CD4-positive, alpha-beta T cell (primary cell): ENCODE measurements at regions of chr9 and their contacts with region 1.

Region 1: DNA sequence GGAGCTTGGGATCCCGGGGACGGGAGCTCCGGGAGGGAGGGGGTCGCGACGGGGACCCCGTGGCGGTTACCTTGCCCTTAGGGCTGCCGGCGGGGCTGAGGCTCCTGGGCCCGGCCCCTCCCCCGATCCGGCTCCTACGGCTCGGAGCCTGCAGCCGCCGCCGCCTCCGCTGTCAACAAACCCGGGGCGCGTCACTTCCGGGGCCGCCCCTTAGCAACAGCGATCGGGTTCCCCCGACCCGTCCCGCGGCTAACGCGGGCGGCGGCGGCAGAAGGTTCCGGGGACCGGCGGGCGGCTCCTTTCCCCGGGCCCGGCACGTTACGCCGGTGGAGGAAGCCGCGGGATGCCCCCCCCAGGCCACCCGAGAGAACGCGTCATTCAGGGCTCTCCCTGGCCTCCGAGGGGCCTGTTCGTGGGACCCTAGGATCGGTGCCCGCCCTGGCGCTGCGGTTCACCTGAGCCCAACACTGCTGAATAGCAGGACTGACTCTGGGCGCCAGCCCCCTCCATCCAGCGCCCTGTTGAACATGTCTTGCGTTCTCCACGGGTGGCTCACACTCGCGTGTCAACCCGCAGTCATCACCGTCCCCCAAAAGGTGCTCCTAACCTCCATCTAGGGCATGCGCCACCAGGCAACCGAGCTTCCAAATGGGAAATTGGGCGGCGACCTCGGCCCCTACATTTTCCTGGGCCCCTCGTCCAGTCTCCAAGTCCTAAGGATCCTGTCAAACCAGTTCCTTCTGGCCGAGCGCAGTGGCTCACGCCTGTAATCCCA is at the start of gene ZER1:
- DNase-seq: peak; percentile 88 to 97 (median 94)
- ATAC-seq: peak; percentile 85
- H3K4me3 ChIP-seq: peak within 1 kb of the TSS; percentile 95
- H3K4me3 Mint-ChIP-seq: peak within 1 kb of the TSS; percentile 98
- H3K27ac ChIP-seq: peak within 1 kb of the TSS; percentile 82 to 83
- H3K27ac Mint-ChIP-seq: peak within 1 kb of the TSS; percentile 98
- H3K4me1 ChIP-seq: peaks cover 25% of the 10 kb centered on the region
- H3K4me1 Mint-ChIP-seq: peaks cover 39% of the 10 kb centered on the region
- H3K27me3 ChIP-seq: no peaks in the 10 kb centered on the region
- H3K27me3 Mint-ChIP-seq: no peaks in the 10 kb centered on the region
- CTCF ChIP-seq: no peak
- total RNA-seq, gene ZER1: 25.4 to 32.6 TPM

Region 2: DNA sequence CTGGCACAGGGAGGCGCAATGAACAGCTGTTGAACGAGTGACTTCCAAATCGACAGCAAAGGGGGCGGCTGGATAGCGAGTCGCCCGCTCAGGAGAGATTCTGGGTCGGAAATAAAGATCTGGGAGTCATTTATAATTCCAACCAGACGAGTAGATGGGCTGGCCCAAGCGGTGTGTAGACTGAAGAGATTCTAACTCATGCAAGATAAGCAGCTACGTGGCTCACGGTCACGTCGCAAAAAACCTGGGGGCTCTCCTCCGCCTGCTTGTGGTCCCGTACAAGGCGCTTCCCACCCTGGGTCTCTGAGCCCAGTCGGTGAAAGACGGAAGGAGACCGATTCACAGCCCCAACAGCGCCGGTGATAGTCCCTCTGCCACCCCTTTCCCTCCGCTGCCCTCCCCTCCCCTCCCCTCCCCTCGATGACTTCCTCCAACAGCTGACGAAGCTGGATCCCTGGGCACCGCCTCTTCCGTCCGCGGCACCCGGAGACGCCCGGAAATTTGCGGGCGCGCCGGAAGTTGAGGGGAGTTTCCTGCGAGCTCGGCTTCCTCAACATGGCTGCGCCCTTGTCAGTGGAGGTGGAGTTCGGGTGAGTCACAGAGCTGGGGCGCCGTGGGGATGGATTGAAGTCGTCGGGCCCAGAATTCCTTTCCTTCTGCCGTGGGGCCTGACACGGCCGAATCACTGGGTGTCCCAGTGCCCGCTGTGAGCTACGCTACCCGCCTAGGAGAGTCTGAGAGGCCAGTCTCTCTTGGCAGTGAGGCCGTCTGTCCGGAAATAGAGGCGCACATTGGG is 400.9 kb before region 1 on chr9 and contains the start of gene URM1:
- CTCF ChIA-PET with region 1: no interaction called
- POLR2A ChIA-PET with region 1: interaction called, 8 read pairs
- intact Hi-C with region 1: loop called in 1 of 2 experiments (anchors 5 kb)
- DNase-seq: peak; percentile 90 to 98 (median 94)
- ATAC-seq: peak; percentile 94
- H3K4me3 ChIP-seq: peak within 1 kb of the TSS; percentile 93
- H3K4me3 Mint-ChIP-seq: peak within 1 kb of the TSS; percentile 97
- H3K27ac ChIP-seq: peak within 1 kb of the TSS; percentile 68 to 92
- H3K27ac Mint-ChIP-seq: peak within 1 kb of the TSS; percentile 94
- H3K4me1 ChIP-seq: peaks cover 20% of the 10 kb centered on the region
- H3K4me1 Mint-ChIP-seq: peaks cover 34% of the 10 kb centered on the region
- H3K27me3 ChIP-seq: no peaks in the 10 kb centered on the region
- H3K27me3 Mint-ChIP-seq: no peaks in the 10 kb centered on the region
- CTCF ChIP-seq: no peak
- total RNA-seq, gene URM1: 28.4 to 28.8 TPM

Region 3: GRCh38 chr9:128688512-128689292 is 83.2 kb before region 1 on chr9 and contains the start of gene SET:
- CTCF ChIA-PET with region 1: no interaction called
- POLR2A ChIA-PET with region 1: interaction called, 19 read pairs
- intact Hi-C with region 1: loop called in 1 of 2 experiments (anchors 1 kb)
- DNase-seq: peak; percentile 82 to 97 (median 92)
- ATAC-seq: peak; percentile 78
- H3K4me3 ChIP-seq: peak within 1 kb of the TSS; percentile 89
- H3K4me3 Mint-ChIP-seq: peak within 1 kb of the TSS; percentile 95
- H3K27ac ChIP-seq: peak within 1 kb of the TSS; percentile 84
- H3K27ac Mint-ChIP-seq: peak within 1 kb of the TSS; percentile 94
- H3K4me1 ChIP-seq: peaks cover 58% of the 10 kb centered on the region
- H3K4me1 Mint-ChIP-seq: peaks cover 59% of the 10 kb centered on the region
- H3K27me3 ChIP-seq: no peaks in the 10 kb centered on the region
- H3K27me3 Mint-ChIP-seq: no peaks in the 10 kb centered on the region
- CTCF ChIP-seq: no peak
- total RNA-seq, gene SET: 228 to 241 TPM

Region 4: DNA sequence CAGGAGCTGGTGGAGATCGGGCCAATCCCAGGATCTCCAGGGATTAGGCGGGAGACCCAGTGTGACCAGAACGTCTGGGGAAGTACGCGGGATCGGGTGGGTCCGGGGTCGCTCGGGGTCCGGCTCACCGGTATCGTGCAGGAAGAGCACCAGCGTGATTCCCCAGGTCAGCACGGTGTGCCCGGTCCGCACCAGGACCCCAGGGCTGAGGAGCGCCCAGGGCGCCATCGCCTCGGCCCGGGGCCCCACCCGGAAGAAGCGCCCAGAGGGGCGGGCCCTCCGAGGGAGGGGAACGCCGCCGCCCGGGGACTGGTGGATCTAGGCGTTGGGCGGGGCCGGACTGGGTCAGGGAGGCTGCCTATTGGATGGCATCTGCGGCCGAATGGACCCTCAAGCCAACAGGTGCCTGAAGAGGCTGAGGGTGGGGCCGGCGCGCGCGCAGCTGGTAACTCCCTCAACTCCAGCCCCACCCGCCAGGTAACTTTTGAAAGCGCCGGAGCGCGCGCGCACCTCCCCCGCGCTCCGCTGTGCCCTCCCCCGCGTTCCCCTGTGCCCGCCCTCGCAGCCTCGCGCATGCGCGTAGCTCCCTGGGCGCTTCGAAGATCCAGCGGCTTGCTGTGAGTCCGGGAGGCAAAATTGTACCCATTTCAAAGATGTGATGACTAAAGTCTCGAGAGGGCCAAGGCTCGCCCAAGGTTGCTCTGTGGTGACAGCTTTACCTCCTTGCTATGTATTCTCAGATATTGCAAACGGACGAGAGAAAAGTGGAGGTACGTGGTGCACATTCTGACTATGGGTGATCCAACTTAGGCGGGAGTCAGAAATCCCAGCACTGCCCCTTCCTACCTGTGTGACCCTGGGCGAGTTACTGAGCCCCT is 47.8 kb before region 1 on chr9 and contains the start of gene ZDHHC12:
- CTCF ChIA-PET with region 1: no interaction called
- POLR2A ChIA-PET with region 1: interaction called, 21 read pairs
- intact Hi-C with region 1: loop called (anchors 2 to 10 kb)
- DNase-seq: peak; percentile 97 to 100 (median 99)
- ATAC-seq: peak; percentile 96
- H3K4me3 ChIP-seq: peak within 1 kb of the TSS; percentile 90
- H3K4me3 Mint-ChIP-seq: peak within 1 kb of the TSS; percentile 95
- H3K27ac ChIP-seq: peak within 1 kb of the TSS; percentile 70 to 72
- H3K27ac Mint-ChIP-seq: peak within 1 kb of the TSS; percentile 86
- H3K4me1 ChIP-seq: peaks cover 53% of the 10 kb centered on the region
- H3K4me1 Mint-ChIP-seq: peaks cover 33% of the 10 kb centered on the region
- H3K27me3 ChIP-seq: no peaks in the 10 kb centered on the region
- H3K27me3 Mint-ChIP-seq: no peaks in the 10 kb centered on the region
- CTCF ChIP-seq: no peak
- total RNA-seq, gene ZDHHC12: 22.0 to 23.7 TPM

Region 5: DNA sequence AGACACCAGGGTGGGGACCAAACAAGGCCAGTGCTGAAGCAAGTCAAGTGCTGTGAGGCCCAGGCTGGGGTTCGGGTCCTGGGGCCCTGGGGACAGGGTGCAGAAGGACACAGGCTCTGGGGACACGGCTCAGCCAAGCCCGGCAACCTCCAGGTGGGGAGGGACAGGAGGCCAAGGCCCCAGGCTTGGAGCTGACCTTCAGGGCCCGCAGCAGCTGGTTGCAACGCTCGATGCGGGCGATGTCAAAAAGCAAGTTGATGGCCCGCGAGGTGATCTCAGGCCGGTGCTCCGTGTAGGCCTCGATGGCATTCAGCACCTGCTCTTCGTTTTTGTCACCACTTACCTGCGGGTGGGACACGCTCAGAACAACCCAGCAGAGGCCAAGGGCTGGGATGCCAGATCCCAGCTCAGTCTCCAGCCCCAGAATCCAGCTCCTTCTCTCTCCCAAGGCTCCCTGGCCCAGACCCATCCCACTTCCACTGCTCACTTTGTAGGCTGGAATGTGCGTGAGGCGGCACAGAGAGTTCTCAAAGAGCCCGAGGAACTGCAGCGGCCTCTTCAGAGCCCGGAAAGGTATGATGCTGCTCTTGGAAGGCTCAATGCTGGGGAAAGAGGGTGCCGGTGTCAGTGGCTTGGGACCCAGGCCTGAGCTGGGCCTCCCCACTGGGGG is 20.9 kb before region 1 on chr9:
- CTCF ChIA-PET with region 1: no interaction called
- POLR2A ChIA-PET with region 1: no interaction called
- intact Hi-C with region 1: no loop called
- DNase-seq: no peak
- ATAC-seq: no peak
- H3K4me3 ChIP-seq: no peak overlapping the region
- H3K4me3 Mint-ChIP-seq: no peak overlapping the region
- H3K27ac ChIP-seq: no peak overlapping the region
- H3K27ac Mint-ChIP-seq: no peak overlapping the region
- H3K4me1 ChIP-seq: no peaks in the 10 kb centered on the region
- H3K4me1 Mint-ChIP-seq: no peaks in the 10 kb centered on the region
- H3K27me3 ChIP-seq: no peaks in the 10 kb centered on the region
- H3K27me3 Mint-ChIP-seq: no peaks in the 10 kb centered on the region
- CTCF ChIP-seq: no peak

Region 6: GRCh38 chr9:128829477-128830251 is 57.7 kb after region 1 on chr9 and contains the start of gene SPOUT1:
- CTCF ChIA-PET with region 1: no interaction called
- POLR2A ChIA-PET with region 1: interaction called, 10 read pairs
- intact Hi-C with region 1: no loop called
- DNase-seq: peak; percentile 84 to 96 (median 92)
- ATAC-seq: peak; percentile 98
- H3K4me3 ChIP-seq: peak within 1 kb of the TSS; percentile 94
- H3K4me3 Mint-ChIP-seq: peak within 1 kb of the TSS; percentile 99
- H3K27ac ChIP-seq: peak within 1 kb of the TSS; percentile 49 to 54
- H3K27ac Mint-ChIP-seq: peak within 1 kb of the TSS; percentile 87
- H3K4me1 ChIP-seq: peaks cover 21% of the 10 kb centered on the region
- H3K4me1 Mint-ChIP-seq: peaks cover 19% of the 10 kb centered on the region
- H3K27me3 ChIP-seq: no peaks in the 10 kb centered on the region
- H3K27me3 Mint-ChIP-seq: no peaks in the 10 kb centered on the region
- CTCF ChIP-seq: no peak
- total RNA-seq, gene SPOUT1: 22.2 to 27.6 TPM